Naive thymus-derived CD4-positive, alpha-beta T cell (primary cell): ENCODE measurements at regions of chr10 and their contacts with region 1.

Region 1: DNA sequence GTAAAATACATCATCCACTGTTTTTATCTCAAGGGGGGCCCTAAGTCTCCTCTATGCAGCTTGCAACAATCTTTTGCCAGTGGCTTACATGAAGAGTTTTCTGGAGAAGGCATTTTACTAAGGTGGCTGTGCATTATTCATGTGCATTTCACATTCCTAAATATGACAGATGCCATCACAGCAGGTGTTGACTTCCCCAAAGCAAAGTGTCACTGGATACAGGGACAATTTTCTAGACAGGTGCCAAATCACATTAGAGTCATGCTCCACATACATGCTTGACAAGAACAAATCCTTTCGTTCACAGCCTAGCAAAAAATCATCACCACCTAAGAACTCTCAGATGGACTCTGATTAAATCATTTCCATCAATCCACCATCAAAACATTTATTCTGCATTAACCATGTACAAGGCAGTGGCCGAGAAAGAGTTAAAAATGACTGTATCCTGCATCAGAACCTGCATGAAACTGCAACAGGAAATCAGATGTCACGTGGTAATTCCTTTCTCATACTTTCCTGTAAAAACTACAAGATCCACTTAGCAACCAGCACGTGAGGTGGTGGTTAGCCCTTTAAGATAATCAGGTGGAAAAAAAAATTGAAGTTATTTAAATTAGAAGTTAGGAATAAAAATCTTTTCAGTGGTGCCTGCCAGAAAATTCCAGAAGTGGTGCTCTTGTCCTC is 88.2 kb upstream of the AFAP1L2 start:
- DNase-seq: peak in 7 of 9 donors; percentile 47 to 73 (median 62)
- ATAC-seq: peak; percentile 55
- H3K4me3 ChIP-seq: peak overlapping the region; percentile 19
- H3K4me3 Mint-ChIP-seq: peak overlapping the region; percentile 56 to 83 (median 74)
- H3K27ac ChIP-seq: peak overlapping the region; percentile 74
- H3K27ac Mint-ChIP-seq: peak overlapping the region; percentile 14 to 94 (median 71)
- H3K4me1 ChIP-seq: peaks cover 16 to 55% of the 10 kb centered on the region in 2 donors
- H3K4me1 Mint-ChIP-seq: peaks cover 42 to 94% (median 84%) of the 10 kb centered on the region in 7 donors
- H3K27me3 ChIP-seq: no peaks in the 10 kb centered on the region
- H3K27me3 Mint-ChIP-seq: no peaks in the 10 kb centered on the region

Region 2: GRCh38 chr10:114481055-114481454 is 11.4 kb before region 1 on chr10:
- CTCF ChIA-PET with region 1: no interaction called
- POLR2A ChIA-PET with region 1: interaction called, 5 read pairs
- intact Hi-C with region 1: loop called in 1 of 2 experiments (anchors 1 kb)
- DNase-seq: no peak
- ATAC-seq: no peak
- H3K4me3 ChIP-seq: no peak overlapping the region
- H3K4me3 Mint-ChIP-seq: peak overlapping the region in 8 of 10 donors; percentile 4 to 60 (median 40)
- H3K27ac ChIP-seq: peak overlapping the region; percentile 49
- H3K27ac Mint-ChIP-seq: peak overlapping the region in 8 of 9 donors; percentile 53 to 92 (median 80)
- H3K4me1 ChIP-seq: peaks cover 0 to 27% of the 10 kb centered on the region in 2 donors
- H3K4me1 Mint-ChIP-seq: peaks cover 24 to 94% (median 90%) of the 10 kb centered on the region in 7 donors
- H3K27me3 ChIP-seq: no peaks in the 10 kb centered on the region
- H3K27me3 Mint-ChIP-seq: no peaks in the 10 kb centered on the region